ENCODE measurements at regions of chr1 and their contacts with region 1.

Region 1: DNA sequence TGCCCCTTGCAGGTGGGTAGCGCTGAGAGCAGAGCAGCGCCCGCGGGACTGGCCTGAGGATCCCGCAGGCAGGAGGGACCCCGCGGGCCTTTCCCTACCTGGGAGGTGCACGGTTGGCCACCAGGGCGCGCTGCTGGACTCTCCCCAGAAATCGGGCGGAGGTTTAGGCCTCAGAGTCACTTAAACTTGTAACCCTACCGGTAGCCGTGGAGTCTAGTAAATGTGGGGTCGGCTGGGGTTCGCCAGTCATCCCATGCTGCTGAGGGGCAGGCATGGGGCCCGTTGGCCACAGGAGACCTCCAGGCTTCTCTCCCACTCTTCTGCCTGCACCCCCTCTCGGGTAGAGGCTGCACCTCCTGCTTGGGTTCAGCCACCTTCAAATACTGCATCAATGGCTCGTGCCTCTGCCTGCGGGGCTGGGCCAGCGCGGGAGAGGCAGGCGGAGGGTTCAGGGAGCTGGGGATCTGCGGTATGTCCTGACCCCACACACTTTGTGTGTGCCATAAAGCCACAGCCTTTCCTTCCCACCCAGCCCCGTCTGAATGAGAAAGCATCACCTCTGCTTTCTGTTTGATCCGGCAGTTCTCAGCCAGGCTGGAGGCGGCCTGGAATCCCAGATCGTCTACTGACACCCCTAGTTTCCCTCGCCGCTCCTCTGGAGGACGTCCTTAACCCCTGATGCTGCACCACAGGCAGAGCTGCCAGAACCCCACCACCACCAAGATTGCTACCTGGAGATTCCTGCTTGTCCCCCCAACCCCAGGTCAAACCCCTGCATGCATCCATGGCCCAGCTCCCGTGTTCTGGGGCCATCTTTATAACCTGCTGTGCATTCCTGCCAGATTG is 12.3 kb upstream of the GSTM4 start:
- DNase-seq: peak; percentile 87
- H3K4me3 ChIP-seq: no peak overlapping the region
- H3K27ac ChIP-seq: peak overlapping the region in 1 of 2 donors; percentile 28
- H3K4me1 ChIP-seq: peaks cover 7% of the 10 kb centered on the region
- H3K27me3 ChIP-seq: no peaks in the 10 kb centered on the region
- CTCF ChIP-seq: peak; percentile 75 to 84 (median 83)
- POLR2A ChIP-seq: no peak

Region 2: DNA sequence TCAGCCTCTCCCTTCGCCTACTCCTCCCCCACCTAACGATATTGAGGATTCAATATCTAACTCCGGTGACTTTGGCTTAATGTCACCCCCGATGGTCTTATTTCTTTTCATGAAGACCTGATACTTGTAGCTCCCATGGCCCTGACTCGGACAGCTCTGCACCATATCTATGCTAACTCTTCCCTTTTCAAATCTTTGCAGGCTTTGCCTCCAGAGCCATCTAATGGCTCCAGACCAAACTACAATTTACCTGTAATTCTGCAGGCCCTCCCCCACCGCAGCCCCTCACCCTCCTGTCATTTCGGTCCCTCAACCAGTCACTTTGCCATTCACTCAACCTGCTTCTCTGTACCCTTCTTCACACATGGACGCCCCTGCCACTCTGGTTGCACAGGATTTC is 60.6 kb after region 1 on chr1:
- intact Hi-C with region 1: no loop called
- DNase-seq: no peak
- H3K4me3 ChIP-seq: no peak overlapping the region
- H3K27ac ChIP-seq: no peak overlapping the region
- H3K4me1 ChIP-seq: no peaks in the 10 kb centered on the region
- H3K27me3 ChIP-seq: no peaks in the 10 kb centered on the region
- CTCF ChIP-seq: no peak
- POLR2A ChIP-seq: no peak

Region 3: DNA sequence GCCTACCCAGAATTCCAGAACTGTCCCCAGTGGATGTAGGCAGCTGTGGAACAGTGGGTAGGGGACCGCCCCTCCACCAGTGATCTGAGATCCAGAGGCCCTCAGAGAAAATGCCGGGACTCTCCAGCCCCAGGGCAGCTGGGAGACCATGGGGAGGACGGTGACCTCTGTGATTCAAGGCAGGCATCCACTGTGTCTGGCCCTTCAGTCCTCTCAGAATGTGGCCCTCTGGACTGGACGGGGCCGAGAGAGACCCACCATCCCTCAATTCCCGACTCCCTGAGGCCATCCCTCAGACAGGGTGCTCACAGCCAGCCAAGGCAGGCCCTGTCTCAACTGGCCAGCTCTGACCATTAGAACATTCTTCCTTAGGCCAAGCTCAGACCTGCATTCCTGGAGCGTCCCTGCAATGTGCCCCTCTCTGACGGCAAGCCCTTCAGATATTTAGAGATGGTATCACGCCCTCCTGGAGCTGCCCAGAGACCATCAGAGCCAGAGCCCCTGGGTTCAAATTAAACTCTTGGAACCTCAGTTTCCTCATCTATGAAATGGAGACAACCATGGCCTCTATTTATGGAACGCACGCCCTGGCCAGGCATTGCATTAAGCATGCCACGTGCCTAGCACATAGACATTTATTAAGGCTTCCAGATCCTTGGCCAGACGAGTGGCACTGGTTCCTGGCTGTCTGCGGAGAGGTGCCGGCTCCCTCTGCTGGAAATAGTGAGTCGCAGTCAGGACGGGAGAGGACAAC is 129.7 kb after region 1 on chr1:
- intact Hi-C with region 1: loop called (anchors 5 kb)
- DNase-seq: peak; percentile 92
- H3K4me3 ChIP-seq: no peak overlapping the region
- H3K27ac ChIP-seq: no peak overlapping the region
- H3K4me1 ChIP-seq: peaks cover 25% of the 10 kb centered on the region
- H3K27me3 ChIP-seq: no peaks in the 10 kb centered on the region
- CTCF ChIP-seq: peak; percentile 80 to 93 (median 89)
- POLR2A ChIP-seq: no peak

Measured in testis (tissue), 5 donors.